ENCODE measurements at regions of chr3 and their contacts with region 1.

Region 1: DNA sequence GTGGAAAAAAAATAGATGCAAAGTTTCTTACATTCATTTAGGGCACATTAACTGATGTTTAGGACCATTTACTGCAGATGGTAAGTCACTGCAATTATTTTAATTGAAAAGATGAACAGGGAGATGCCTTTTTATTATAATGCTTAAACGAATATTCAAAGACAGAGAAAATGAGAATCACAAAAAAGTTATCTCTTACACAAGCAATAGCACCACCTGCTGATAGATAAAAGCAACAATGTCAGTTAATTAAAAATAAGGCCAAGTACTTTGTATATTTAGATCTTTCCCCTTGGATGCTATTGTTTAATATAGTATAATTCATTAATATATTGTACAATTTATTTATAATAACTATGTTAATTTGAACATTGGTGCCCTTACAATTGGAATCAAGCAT is 55.9 kb downstream of the IFT80 start:
- DNase-seq: no peak
- ATAC-seq: no peak

Region 2: DNA sequence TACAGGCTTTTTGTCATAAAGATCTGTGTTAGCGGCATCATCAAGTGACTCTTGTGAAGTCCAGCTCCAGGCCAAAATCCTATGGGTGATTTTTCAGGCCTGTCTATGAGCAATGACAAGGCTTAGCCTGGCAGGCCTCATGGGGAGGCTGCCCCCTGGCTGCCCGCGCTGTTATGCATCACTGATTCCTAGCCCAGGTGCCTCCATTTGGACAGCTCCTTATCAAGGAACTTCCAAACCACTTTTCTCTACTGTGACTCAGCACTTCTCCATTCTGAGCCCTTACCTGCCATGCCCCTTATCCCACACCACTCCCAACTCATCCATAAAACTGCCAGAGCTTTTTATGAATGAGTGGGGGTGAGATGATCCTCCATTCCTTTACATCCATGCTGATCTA is 209.4 kb before region 1 on chr3:
- intact Hi-C with region 1: no loop called
- DNase-seq: no peak
- ATAC-seq: no peak

Region 3: DNA sequence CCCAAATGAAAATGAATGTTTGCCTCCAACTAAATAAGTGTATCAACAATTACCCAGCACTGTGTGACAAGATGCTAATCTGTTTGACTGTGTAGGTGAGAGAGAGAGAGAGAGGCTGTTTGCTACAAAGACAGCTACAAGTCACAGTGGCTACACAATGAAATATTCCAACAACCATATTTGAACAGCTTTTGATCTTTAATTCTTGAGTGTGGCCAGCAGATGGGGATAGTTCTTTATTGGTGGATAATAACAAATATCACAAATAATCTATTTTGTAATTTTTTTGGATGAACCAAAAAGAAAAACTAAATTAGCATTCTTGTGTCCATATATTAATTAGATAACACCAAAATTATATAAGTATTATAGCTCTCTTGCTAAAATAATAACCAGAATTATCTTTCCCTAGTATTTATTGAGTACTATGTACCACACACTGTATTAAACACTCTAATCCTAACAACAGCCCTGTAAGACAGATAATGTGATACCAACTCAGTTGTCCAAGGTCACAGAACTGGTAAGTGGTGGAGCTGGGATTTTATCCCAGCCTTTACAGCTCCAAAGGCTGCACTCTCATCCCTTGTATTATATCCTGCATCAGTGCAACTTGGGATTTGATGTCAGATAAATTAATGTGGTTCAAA is 179.8 kb before region 1 on chr3:
- intact Hi-C with region 1: loop called (anchors 5 kb)
- DNase-seq: no peak
- ATAC-seq: peak; percentile 39

Region 4: DNA sequence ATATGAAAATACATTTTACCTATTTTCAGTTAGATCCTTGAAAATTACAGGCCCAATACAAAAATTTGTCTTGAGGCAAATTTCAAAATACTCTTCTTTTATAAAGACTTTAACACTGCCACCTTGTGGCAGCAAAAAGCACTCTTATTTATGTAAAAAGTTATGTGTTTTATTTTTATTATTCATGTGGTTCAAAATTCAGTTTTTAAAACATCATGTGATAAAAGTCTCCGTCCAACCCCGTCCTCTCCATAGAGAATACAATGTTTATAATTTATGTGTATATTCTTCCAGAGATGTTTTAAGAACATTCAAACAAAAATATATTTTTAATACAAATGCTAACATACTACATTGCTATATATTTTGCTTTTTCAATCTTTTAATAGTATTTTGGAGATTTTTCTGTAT is 143.3 kb after region 1 on chr3:
- intact Hi-C with region 1: no loop called
- DNase-seq: no peak
- ATAC-seq: no peak